Calu3 (cell line): ENCODE measurements at regions of chr17 and their contacts with region 1.

Region 1: DNA sequence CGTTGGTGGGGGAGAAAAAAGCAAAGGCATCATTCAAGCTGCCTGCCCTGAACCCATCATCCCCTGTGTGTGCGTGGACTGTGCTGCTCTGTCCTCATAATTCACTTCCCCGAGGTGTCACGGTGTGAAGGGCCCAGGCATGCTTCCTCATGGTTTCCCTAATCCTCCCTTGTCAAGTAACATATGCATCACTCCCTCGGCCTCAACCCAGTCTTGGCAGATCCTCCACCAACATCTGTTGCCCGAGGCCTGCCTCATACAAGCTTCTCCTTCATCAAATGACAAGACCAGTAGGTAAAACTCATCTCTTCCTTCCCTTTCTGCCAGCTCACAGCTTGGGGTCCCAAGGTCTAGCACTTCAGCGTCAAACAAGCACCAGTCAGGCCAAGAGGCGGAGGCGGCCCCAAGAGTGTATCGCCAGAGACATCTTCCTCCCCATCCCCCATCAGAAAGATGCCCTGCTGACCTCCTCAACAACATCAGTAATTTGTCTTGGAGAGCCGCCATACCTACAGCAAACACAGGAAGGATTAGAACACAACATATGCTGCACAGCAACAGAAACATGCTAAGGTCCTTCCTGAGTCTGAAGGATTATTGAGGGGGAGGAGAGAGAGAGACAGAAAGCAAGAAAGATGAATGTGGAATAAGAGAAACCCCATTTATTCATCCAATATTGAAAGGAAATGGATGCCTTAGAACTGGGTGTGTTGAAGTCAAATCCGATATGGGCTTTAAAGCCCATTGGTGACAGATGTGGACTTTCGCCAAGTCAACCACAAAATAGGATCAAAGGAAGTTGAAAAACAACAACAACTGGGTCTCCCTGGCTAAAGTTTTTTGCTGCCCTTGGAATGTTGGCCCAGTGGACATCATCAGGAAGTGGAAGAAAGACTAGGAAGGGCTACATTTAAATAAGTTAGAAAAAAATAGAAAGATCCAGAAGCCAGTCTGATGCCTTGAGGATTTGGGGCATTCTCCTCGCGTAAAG is 38.4 kb downstream of the SOX9 start:
- DNase-seq: no peak
- H3K4me3 Mint-ChIP-seq: no peak overlapping the region
- H3K27ac Mint-ChIP-seq: no peak overlapping the region
- H3K4me1 Mint-ChIP-seq: peaks cover 10% of the 10 kb centered on the region
- H3K27me3 Mint-ChIP-seq: peaks cover under 1% of the 10 kb centered on the region
- CTCF ChIP-seq: no peak

Region 2: DNA sequence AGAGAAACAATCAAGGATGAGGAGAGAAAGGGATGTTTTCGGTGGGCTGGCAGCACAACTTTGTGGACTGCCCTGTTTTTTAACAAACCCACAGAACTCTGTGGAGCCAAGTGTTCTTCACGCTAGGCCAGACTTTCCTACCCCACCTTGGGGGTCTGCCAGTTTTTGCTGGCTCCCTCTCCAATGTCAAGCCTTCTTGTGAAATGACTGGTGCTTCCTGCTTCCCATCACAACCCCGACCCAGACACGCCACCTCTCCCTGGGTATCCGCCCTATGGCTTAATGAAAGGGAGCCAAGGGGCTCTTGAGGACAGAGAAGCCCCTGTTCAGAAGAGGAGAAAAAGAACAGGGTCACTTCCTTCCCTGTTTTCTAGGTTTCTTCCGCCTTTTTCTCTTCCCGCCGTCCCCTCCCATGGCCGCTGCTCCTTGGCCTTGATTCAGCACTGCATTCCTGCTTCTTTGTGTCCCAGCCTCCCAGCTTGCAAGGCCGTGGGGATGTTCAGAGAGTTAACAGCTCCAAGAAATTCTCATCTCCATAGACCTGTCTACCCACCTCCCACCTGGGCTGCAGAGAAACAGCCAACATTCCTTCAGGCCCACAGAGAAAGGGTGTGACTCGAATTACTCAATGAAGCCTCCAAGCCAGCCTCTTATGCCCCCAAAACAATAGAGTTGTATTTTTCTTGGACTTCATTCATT is 54.9 kb before region 1 on chr17:
- CTCF ChIA-PET with region 1: no interaction called
- intact Hi-C with region 1: no loop called
- DNase-seq: no peak
- H3K4me3 Mint-ChIP-seq: no peak overlapping the region
- H3K27ac Mint-ChIP-seq: no peak overlapping the region
- H3K4me1 Mint-ChIP-seq: no peaks in the 10 kb centered on the region
- H3K27me3 Mint-ChIP-seq: peaks cover 40% of the 10 kb centered on the region
- CTCF ChIP-seq: no peak

Region 3: DNA sequence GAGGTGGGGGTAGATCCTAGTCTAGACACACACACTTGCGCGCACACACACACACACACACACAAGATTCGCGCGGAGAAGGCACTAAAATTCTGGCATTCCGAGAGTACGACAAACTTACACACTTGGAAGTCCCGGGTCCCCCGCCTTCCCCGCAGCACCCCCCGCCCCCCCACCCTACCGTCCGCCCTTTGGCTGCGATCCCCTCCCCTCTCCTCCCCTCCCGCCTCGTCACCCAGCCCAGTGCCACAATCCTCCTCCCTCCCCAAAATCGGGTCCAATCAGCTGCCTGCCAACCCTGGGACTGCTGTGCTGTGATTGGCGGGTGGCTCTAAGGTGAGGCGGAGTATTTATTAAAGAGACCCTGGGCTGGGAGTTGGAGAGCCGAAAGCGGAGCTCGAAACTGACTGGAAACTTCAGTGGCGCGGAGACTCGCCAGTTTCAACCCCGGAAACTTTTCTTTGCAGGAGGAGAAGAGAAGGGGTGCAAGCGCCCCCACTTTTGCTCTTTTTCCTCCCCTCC is 38.5 kb before region 1 on chr17 and contains the start of gene SOX9:
- CTCF ChIA-PET with region 1: no interaction called
- intact Hi-C with region 1: no loop called
- DNase-seq: peak; percentile 94
- H3K4me3 Mint-ChIP-seq: peak within 1 kb of the TSS; percentile 90
- H3K27ac Mint-ChIP-seq: peak within 1 kb of the TSS; percentile 97
- H3K4me1 Mint-ChIP-seq: peaks cover 25% of the 10 kb centered on the region
- H3K27me3 Mint-ChIP-seq: peaks cover 50% of the 10 kb centered on the region
- CTCF ChIP-seq: no peak
- total RNA-seq, gene SOX9: 173 and 210 TPM in 2 replicates

Region 4: DNA sequence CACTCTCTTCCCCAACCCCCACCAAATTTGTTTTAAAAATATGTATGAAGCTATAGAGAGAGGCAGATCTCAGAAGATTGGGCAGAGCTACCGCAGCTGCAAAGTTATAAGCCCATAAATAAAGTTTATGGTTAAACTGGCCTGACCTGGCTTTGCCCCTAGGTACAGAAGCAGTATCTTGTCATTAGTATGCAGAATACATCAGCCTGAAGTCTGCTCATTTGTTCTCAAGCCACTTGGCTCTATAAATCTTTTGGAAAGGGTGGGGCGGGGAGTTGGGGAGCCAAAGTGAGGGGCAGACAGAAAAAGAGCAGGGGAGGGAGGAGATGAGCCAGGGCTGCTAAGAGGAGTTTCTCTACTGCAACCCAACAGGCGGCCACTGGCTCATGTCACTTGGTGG is 74.8 kb after region 1 on chr17:
- CTCF ChIA-PET with region 1: no interaction called
- intact Hi-C with region 1: loop called (anchors 2 kb)
- DNase-seq: no peak
- H3K4me3 Mint-ChIP-seq: no peak overlapping the region
- H3K27ac Mint-ChIP-seq: no peak overlapping the region
- H3K4me1 Mint-ChIP-seq: no peaks in the 10 kb centered on the region
- H3K27me3 Mint-ChIP-seq: no peaks in the 10 kb centered on the region
- CTCF ChIP-seq: no peak